GM12878 (cell line): ENCODE measurements at regions of chr5 and their contacts with region 1.

Region 1: DNA sequence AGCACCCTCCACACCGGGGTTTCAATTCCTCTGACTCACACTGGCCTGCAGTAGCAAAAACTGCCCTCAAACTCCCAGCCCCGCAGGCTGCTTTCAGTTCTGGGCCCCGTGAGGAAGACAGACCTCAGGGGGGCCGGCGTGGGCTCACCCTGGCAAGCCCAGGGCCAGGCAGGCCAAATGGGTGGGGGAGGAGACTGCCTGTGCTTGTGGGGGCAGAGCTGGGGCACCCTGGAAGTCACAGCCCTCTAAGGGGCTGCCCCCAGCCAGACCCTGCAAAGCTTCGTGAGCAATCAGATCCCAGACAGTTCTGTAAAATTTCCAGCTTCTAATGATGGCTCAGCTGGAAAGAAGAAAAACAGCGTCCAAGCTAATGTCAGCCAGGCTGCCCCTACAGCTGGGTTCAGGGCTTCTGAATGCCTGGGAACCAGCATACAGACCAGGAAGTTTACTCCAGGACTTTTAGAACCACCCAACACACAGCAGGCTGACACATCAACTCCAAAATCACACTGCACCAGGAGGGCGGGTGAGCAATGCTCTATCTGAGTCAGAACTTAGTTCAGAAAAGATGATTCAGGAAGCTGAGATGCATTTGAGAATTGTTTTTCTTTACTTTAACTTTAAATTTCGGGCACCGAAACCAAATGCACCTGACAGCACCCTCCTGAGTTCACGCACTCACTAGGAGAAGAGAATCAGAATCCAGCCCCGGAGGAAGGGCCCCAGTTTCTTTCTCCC is 34.6 kb downstream of the LPCAT1 start:
- DNase-seq: peak; percentile 77
- ATAC-seq: peak; percentile 57
- H3K4me3 ChIP-seq: peak overlapping the region; percentile 75
- H3K27ac ChIP-seq: peak overlapping the region; percentile 98
- H3K4me1 ChIP-seq: peaks cover 84% of the 10 kb centered on the region
- H3K27me3 ChIP-seq: no peaks in the 10 kb centered on the region
- CTCF ChIP-seq: no peak
- EP300 ChIP-seq: peak; percentile 19 to 21; a peak in 1 of 4 replicates
- POLR2A ChIP-seq: peak; percentile 25
- RAD21 ChIP-seq: 0 out of 2 replicates have a peak, but pooled peaks have one; percentile 1

Region 2: GRCh38 chr5:1037123-1037670 is 451.9 kb before region 1 on chr5:
- CTCF ChIA-PET with region 1: no interaction called
- POLR2A ChIA-PET with region 1: no interaction called
- RAD21 ChIA-PET with region 1: no interaction called
- SMC1A ChIA-PET with region 1: no interaction called
- in situ Hi-C with region 1: no loop called
- intact Hi-C with region 1: no loop called
- DNase-seq: no peak
- ATAC-seq: no peak
- H3K4me3 ChIP-seq: no peak overlapping the region
- H3K27ac ChIP-seq: no peak overlapping the region
- H3K4me1 ChIP-seq: no peaks in the 10 kb centered on the region
- H3K27me3 ChIP-seq: no peaks in the 10 kb centered on the region
- CTCF ChIP-seq: no peak
- EP300 ChIP-seq: no peak
- POLR2A ChIP-seq: no peak
- RAD21 ChIP-seq: no peak

Region 3: GRCh38 chr5:1503241-1504068 is 14.3 kb after region 1 on chr5:
- CTCF ChIA-PET with region 1: interaction called, 27 read pairs
- POLR2A ChIA-PET with region 1: interaction called, 108 read pairs
- RAD21 ChIA-PET with region 1: interaction called, 36 read pairs
- SMC1A ChIA-PET with region 1: interaction called, 93 read pairs
- in situ Hi-C with region 1: no loop called
- intact Hi-C with region 1: loop called (anchors 1 kb)
- DNase-seq: no peak
- ATAC-seq: peak; percentile 42
- H3K4me3 ChIP-seq: peak overlapping the region; percentile 55
- H3K27ac ChIP-seq: peak overlapping the region; percentile 93
- H3K4me1 ChIP-seq: peaks cover 81% of the 10 kb centered on the region
- H3K27me3 ChIP-seq: no peaks in the 10 kb centered on the region
- CTCF ChIP-seq: no peak
- EP300 ChIP-seq: no peak
- POLR2A ChIP-seq: no peak
- RAD21 ChIP-seq: no peak

Region 4: DNA sequence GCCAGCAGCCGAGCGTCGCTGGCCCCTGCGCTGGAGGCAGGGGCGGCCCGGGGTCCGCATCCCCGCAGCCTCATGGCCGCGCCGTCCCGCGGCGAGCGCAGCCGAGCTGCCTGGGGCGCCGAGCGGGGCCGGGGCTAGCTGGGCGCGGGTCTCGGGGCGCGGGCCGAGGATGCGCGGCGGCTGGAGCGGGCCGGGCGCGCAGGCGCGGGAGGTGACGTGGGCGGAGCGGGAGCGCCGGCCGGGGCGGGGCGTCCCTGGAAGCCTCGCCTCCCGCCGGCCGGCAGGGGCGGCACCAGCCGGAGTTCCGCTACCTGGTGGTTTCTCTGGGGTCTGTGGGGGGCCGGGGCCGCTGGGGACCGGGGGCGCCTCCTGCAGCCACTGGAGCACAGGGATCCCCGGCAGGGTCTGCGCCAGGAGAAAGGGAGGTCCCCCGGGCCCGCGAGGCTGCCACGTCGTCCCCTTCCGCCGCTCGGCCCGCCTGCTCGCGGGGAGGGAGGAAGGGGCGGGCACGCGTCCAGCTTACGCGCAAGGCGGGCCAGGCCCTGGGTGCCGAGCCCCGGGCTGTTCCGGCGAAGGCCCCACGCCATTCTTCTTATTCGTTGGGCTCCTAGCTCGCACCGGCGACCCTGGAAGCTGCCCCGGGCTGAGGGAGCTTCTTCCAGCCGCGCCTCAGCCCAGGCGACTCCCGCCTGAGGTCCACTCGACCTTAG is 34.8 kb after region 1 on chr5 and contains the start of gene LPCAT1:
- CTCF ChIA-PET with region 1: interaction called, 5 read pairs
- POLR2A ChIA-PET with region 1: interaction called, 17 read pairs
- RAD21 ChIA-PET with region 1: interaction called, 4 read pairs
- SMC1A ChIA-PET with region 1: interaction called, 8 read pairs
- in situ Hi-C with region 1: no loop called
- intact Hi-C with region 1: loop called (anchors 5 kb)
- DNase-seq: no peak
- ATAC-seq: peak; percentile 89
- H3K4me3 ChIP-seq: peak within 1 kb of the TSS; percentile 88
- H3K27ac ChIP-seq: peak within 1 kb of the TSS; percentile 78
- H3K4me1 ChIP-seq: peaks cover 16% of the 10 kb centered on the region
- H3K27me3 ChIP-seq: no peaks in the 10 kb centered on the region
- CTCF ChIP-seq: 0 out of 6 replicates have a peak, but pooled peaks of 1 of the 3 experiments have one; percentile 5
- EP300 ChIP-seq: no peak
- POLR2A ChIP-seq: peak; percentile 86
- RAD21 ChIP-seq: no peak
- polyA plus RNA-seq, gene LPCAT1: 2.3 to 7.0 TPM

Region 5: DNA sequence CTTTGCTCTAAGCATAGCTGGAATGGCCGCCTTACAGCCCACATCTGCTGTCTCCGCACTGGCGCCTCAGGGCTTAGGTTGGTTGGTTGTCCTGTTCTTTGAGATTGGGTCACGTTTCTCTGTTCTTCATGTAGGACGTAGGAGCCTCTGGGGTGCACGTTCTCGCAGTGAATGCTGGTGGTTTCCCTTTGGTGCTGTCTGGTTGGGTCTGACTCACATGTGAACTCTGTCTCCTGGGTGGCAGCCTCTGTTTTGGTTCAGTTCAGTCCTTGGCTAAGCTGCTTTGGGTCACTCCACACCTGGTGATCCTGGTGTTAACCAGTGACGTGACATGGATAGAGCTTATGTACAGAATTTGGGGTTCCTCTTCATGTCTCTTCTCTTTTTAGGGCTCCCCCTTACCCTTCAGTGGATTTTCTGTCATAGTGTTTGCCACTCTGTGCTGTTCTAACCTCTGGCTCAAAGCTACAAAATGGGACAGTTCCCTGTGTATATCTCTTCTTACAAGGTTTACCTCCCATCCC is 47.3 kb after region 1 on chr5:
- CTCF ChIA-PET with region 1: interaction called, 3 read pairs
- POLR2A ChIA-PET with region 1: interaction called, 3 read pairs
- RAD21 ChIA-PET with region 1: interaction called, 12 read pairs
- SMC1A ChIA-PET with region 1: interaction called, 9 read pairs
- in situ Hi-C with region 1: no loop called
- intact Hi-C with region 1: loop called (anchors 2 kb)
- DNase-seq: peak; percentile 72
- ATAC-seq: peak; percentile 99
- H3K4me3 ChIP-seq: peak overlapping the region; percentile 41; the same call in 1 of the 2 replicates
- H3K27ac ChIP-seq: peak overlapping the region; percentile 54
- H3K4me1 ChIP-seq: peaks cover 9% of the 10 kb centered on the region; the same call in 1 of the 2 replicates
- H3K27me3 ChIP-seq: no peaks in the 10 kb centered on the region
- CTCF ChIP-seq: no peak
- EP300 ChIP-seq: no peak
- POLR2A ChIP-seq: peak; percentile 63
- RAD21 ChIP-seq: no peak

Region 6: GRCh38 chr5:1594357-1595106 is 105.4 kb after region 1 on chr5:
- CTCF ChIA-PET with region 1: interaction called, 4 read pairs
- POLR2A ChIA-PET with region 1: interaction called, 3 read pairs
- RAD21 ChIA-PET with region 1: interaction called, 4 read pairs
- SMC1A ChIA-PET with region 1: no interaction called
- in situ Hi-C with region 1: no loop called
- intact Hi-C with region 1: loop called (anchors 5 kb)
- DNase-seq: peak; percentile 70
- ATAC-seq: peak; percentile 97
- H3K4me3 ChIP-seq: peak overlapping the region; percentile 95
- H3K27ac ChIP-seq: peak overlapping the region; percentile 41
- H3K4me1 ChIP-seq: no peaks in the 10 kb centered on the region
- H3K27me3 ChIP-seq: no peaks in the 10 kb centered on the region
- CTCF ChIP-seq: peak; percentile 64 to 79 (median 78)
- EP300 ChIP-seq: no peak
- POLR2A ChIP-seq: peak; percentile 89
- RAD21 ChIP-seq: peak; percentile 40

Region 7: GRCh38 chr5:1901061-1901460 is 411.9 kb after region 1 on chr5:
- CTCF ChIA-PET with region 1: no interaction called
- POLR2A ChIA-PET with region 1: no interaction called
- RAD21 ChIA-PET with region 1: no interaction called
- SMC1A ChIA-PET with region 1: no interaction called
- in situ Hi-C with region 1: no loop called
- intact Hi-C with region 1: no loop called
- DNase-seq: no peak
- ATAC-seq: no peak
- H3K4me3 ChIP-seq: no peak overlapping the region
- H3K27ac ChIP-seq: no peak overlapping the region
- H3K4me1 ChIP-seq: no peaks in the 10 kb centered on the region
- H3K27me3 ChIP-seq: no peaks in the 10 kb centered on the region
- CTCF ChIP-seq: no peak
- EP300 ChIP-seq: no peak
- POLR2A ChIP-seq: no peak
- RAD21 ChIP-seq: no peak